ENCODE measurements at regions of chr14 and their contacts with region 1.

Region 1: GRCh38 chr14:101774006-101774795 is 12.7 kb downstream of the PPP2R5C start:
- DNase-seq: no peak
- ATAC-seq: no peak

Region 2: DNA sequence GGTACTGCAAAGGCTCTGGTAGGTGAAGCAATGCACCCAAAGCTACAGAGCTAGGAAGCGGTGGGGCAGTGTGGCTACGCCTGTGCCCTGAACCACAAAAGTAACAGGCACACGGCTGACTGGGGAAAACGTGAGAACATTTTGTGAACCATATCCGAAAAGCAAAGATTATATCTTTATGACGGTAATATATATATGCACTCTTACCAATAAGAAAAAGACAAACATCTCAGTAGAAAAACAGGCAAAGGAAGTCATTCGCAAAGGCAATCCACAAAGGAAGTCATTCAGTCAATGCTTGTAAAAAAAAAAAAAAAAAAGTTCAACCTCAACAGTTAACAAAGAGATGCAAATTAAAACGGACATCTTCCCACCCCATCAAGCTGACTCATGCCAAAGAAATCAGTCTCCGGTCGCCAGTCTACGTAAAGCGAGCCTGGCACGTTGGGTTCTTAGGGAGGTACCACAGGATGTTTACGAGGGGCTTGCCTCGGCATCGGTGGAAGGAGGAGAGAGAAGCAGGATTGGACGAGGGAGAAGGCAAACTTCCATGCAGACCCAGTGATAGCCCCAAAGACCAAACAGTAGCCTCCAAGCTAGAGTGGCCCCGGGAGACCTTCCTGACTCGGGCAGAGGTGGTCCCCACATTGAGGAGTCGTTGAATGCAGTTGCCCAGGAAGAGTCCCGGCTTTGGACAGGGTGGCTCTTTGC is 52.1 kb before region 1 on chr14:
- intact Hi-C with region 1: no loop called
- DNase-seq: peak; percentile 48
- ATAC-seq: peak; percentile 36 to 65

Region 3: DNA sequence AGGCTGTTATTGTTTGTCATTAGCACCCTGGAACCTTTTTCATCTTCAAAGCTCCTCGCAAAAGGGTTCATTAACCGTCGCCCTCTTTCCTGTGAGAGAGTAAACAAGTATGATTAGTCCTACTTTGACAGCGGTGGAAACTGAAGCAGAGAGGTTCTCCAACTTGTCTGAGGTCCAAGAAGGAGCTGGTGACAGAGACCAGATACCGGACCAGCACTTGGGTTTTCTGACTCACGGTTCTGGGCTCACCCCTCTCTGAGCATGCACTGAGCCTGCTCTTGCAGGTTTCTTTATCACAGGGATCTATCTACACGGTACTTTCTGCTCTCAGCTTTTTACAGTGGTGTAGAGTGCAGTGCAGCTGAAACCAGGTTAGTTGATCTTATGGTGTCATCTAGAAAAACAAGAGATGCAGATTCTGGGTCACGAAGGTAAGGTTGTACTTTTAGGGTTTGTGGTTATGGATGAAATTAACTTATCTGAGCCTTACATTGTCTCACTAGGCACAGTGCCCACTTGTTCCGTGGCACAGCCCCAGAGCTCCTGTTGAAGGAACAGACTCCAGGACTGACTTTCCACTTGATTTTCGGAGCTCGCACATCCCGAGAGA is 49.4 kb after region 1 on chr14:
- intact Hi-C with region 1: loop called in 1 of 2 experiments (anchors 10 kb)
- DNase-seq: no peak
- ATAC-seq: peak; percentile 31 to 73

Region 4: GRCh38 chr14:101927859-101928258 is 153.7 kb after region 1 on chr14:
- intact Hi-C with region 1: loop called in 1 of 2 experiments (anchors 10 kb)
- DNase-seq: peak; percentile 92
- ATAC-seq: peak; percentile 99

Region 5: GRCh38 chr14:102028421-102029172 is 254.4 kb after region 1 on chr14:
- intact Hi-C with region 1: no loop called
- DNase-seq: no peak
- ATAC-seq: peak in 1 of 2 donors; percentile 50